Activated CD4-positive, alpha-beta memory T cell treated with anti-CD3 and anti-CD28 coated beads for 36 hours (primary cell): ENCODE measurements at regions of chr5 and their contacts with region 1.

Region 1: DNA sequence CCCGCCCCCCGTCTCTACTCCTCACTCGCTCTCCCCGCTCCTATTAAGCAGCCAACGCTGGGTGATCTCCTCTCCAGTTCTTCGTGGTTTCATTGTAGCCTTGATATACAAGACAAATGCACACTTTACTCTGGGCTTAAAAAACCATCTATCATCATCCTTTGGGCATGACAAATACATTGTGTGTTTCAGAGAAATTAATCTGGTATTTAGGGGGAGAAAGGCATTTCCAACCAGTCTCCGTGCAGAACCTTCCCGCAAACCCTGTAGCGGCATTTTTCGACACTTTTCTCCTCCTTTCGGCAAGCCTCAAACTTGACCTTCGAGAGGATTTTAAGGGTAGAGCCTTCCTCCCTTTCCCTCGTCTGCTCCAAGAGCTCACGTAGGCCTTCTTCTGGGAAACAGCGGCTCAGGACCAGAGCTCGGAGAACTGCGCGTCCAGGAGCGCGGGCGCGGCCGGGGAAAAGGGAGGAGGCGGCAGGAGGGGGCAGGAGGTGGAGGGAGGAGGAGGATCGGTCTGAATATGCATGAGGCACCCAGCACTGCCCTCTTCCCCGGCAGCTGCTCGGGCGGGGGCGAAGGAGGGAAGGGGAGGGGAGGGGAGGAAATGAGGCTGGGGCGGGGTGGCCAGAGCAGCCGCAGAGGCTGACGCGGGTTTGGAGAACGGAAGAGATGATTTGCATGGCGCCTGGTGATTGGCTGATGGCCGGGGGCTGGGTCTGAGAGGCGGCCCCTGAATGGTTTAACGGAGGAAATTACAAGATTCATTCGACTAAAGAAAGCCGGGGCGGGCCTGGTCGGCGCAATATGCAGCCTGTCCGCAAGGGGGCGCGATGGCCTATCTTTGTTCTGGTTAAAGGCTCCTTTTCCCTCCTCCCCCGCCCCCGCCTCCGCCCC is 127.5 kb downstream of the TMEM161B start:
- DNase-seq: peak; percentile 94
- H3K4me3 Mint-ChIP-seq: no peak overlapping the region
- H3K27ac Mint-ChIP-seq: no peak overlapping the region
- H3K4me1 Mint-ChIP-seq: peaks cover 17% of the 10 kb centered on the region
- H3K27me3 Mint-ChIP-seq: peaks cover 31% of the 10 kb centered on the region

Region 2: DNA sequence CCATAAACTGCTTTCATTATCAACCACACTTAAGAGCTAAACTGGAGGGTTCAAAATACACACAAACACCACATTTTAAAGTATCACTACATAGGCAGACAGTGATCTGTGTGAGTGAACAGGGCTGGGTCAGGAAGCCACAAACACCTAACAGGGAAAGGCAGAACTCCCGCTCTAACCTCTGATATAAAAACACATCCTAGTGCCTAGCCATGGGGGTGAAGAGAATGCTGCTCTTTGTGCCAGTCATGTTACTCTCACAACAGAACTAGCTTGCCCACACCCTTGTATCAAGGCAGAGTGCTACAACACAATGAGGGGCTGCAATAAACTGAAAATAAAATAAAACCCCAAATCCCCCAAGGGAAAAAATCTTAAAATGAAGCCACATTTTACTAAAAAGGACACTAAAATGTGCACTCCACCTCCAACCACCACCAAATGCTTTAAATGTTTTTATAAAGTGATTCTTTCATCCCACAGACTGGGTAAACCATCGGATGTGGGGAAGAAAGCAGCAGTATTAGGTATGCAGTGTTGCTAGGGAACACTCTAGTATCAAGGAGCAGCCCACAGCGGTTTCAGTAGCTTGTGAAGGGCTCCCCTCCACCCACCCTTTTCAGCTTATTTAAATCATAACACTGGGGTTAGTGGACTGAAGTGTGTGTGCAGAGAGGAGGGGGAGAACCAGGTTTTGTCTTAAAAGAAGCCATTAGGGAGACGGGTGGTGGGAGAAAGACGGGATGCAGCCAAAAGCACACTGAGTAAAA is 63.1 kb after region 1 on chr5:
- CTCF ChIA-PET with region 1: interaction called, 3 read pairs
- POLR2A ChIA-PET with region 1: no interaction called
- intact Hi-C with region 1: loop called (anchors 5 kb)
- DNase-seq: peak; percentile 68
- H3K4me3 Mint-ChIP-seq: peak overlapping the region; percentile 9
- H3K27ac Mint-ChIP-seq: peak overlapping the region; percentile 76
- H3K4me1 Mint-ChIP-seq: peaks cover 15% of the 10 kb centered on the region
- H3K27me3 Mint-ChIP-seq: no peaks in the 10 kb centered on the region

Region 3: GRCh38 chr5:88268385-88269184 is 127.5 kb after region 1 on chr5 and contains the start of gene TMEM161B:
- CTCF ChIA-PET with region 1: no interaction called
- POLR2A ChIA-PET with region 1: no interaction called
- intact Hi-C with region 1: loop called (anchors 1 kb)
- DNase-seq: peak; percentile 95
- H3K4me3 Mint-ChIP-seq: peak within 1 kb of the TSS; percentile 97
- H3K27ac Mint-ChIP-seq: peak within 1 kb of the TSS; percentile 94
- H3K4me1 Mint-ChIP-seq: peaks cover 45% of the 10 kb centered on the region
- H3K27me3 Mint-ChIP-seq: no peaks in the 10 kb centered on the region
- total RNA-seq, gene TMEM161B: 21.2 to 22.9 TPM

Region 4: GRCh38 chr5:88602584-88602983 is 461.5 kb after region 1 on chr5:
- CTCF ChIA-PET with region 1: no interaction called
- POLR2A ChIA-PET with region 1: no interaction called
- intact Hi-C with region 1: loop called (anchors 2 kb)
- DNase-seq: peak; percentile 22
- H3K4me3 Mint-ChIP-seq: no peak overlapping the region
- H3K27ac Mint-ChIP-seq: no peak overlapping the region
- H3K4me1 Mint-ChIP-seq: no peaks in the 10 kb centered on the region
- H3K27me3 Mint-ChIP-seq: peaks cover 2% of the 10 kb centered on the region

Region 5: GRCh38 chr5:88680253-88681132 is 539.4 kb after region 1 on chr5:
- CTCF ChIA-PET with region 1: interaction called, 3 read pairs
- POLR2A ChIA-PET with region 1: no interaction called
- intact Hi-C with region 1: loop called (anchors 1 kb)
- DNase-seq: peak; percentile 80
- H3K4me3 Mint-ChIP-seq: no peak overlapping the region
- H3K27ac Mint-ChIP-seq: no peak overlapping the region
- H3K4me1 Mint-ChIP-seq: peaks cover 12% of the 10 kb centered on the region
- H3K27me3 Mint-ChIP-seq: peaks cover 69% of the 10 kb centered on the region